ENCODE measurements at regions of chrX and their contacts with region 1.

Region 1: DNA sequence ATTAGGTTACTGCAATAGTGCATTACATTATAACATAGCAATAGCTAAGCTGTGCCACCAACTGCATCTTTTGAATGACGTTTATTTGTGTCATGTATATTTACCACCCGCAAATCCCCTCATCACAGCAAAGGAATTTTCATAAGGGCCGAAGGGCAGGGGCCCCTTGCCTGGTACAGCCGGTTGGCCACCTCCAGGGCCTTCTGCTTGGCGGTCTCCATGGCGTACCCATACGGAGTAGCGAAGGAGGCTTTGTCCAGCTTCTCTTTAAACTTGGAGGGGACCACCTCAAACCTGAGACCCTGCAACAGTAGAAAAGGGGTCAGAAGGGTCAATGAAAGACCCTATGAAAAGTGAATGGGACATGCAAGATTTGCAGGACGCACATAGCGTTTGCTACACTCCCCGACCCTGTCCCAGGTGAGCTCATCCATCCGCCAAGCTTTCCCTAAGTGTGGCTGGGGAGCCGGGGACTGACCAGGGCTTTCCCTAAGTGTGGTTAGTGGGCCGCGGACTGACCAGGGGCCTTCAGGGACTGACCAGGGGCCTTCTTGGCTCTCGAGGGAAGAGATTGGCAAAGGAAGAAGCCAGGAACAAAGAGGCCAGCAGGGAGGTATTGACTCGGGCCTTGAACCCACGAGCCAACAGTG is 10.6 kb downstream of the ASMTL start:
- DNase-seq: peak in 2 of 3 donors; percentile 3 to 24
- ATAC-seq: no peak
- H3K4me3 ChIP-seq: no peak overlapping the region
- H3K27ac ChIP-seq: no peak overlapping the region
- H3K4me1 ChIP-seq: no peaks in the 10 kb centered on the region
- H3K27me3 ChIP-seq: no peaks in the 10 kb centered on the region

Region 2: DNA sequence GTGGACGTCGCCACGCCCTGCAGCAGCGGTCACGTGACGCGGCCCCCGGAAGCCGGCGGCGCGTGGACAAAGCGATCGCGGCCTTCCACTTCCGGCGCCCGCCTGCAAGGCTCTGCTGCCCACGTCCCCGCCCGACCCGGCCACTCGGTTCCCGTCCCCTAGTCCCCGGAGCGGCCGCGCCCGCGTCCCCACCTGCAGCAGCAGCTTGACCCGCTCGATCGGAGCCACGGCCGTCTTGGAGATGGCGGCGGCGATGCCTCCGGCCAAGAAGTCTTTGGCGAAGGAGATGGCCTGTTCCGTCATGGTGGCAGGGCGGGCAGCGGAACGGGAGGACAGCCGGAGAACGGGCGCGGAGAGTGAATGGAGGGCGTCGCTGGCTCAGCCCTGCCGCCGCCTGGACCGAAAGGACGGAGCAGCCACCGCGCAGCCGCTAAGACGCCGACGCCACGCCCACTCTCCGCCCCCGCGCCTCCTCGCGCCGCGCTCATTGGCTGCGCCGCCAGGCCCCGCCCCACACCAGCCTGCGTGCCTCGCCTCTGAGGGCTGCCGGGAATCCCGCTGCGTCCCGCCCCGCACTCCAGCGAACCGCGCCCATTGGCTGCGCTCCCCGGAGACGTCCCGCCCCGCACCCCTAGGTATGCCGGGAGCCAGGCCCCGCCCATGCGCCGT is 50.3 kb before region 1 on chrX and contains the start of gene SLC25A6:
- intact Hi-C with region 1: loop called in 2 of 4 experiments (anchors 10 kb)
- DNase-seq: peak; percentile 100
- ATAC-seq: peak; percentile 96 to 97
- H3K4me3 ChIP-seq: peak within 1 kb of the TSS; percentile 70
- H3K27ac ChIP-seq: peak within 1 kb of the TSS; percentile 95
- H3K4me1 ChIP-seq: peaks cover 3% of the 10 kb centered on the region
- H3K27me3 ChIP-seq: no peaks in the 10 kb centered on the region
- total RNA-seq, gene SLC25A6: 154 to 228 (median 193) TPM

Region 3: DNA sequence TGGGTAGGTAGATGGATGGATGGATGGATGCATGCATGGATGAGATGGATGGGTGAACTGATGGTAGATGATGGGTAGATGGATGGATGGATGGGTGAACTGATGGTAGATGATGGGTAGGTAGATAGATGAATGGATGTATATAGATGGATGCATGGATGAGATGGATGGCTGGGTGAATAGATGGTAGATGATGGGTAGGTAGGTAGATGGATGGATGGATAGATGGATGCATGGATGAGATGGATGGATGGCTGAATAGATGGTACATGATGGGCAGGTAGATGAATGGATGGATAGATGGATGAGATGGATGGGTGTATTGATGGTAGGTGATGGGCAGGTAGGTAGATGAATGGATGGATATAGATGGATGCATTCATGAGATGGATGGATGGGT is 35.1 kb before region 1 on chrX:
- intact Hi-C with region 1: no loop called
- DNase-seq: no peak
- ATAC-seq: no peak
- H3K4me3 ChIP-seq: no peak overlapping the region
- H3K27ac ChIP-seq: no peak overlapping the region
- H3K4me1 ChIP-seq: no peaks in the 10 kb centered on the region
- H3K27me3 ChIP-seq: no peaks in the 10 kb centered on the region

Measured in right cardiac atrium (tissue), 5 donors.